Activated CD8-positive, alpha-beta memory T cell treated with anti-CD3 and anti-CD28 coated beads, Interleukin-2, amount 10 ng/mL, durations not matched to agents 7 days and 5 days (primary cell): ENCODE measurements at regions of chr15 and their contacts with region 1.

Region 1: DNA sequence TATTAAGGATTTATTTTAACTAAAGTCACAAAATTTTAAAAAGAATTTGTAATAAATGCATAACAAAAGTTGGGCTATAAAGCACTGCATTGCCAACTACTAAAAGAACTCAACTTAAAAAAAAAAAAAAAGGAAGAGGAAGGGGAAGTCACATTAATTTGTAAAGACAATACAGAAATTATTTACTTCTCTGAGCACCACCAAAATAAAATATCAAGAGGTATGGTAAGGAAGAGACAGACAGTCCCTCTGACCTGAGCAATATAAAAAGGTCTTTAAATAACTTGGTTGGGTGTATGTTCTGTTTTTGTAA is 83.5 kb downstream of the UACA start:
- DNase-seq: no peak
- ATAC-seq: no peak
- H3K4me3 Mint-ChIP-seq: no peak overlapping the region
- H3K27ac Mint-ChIP-seq: no peak overlapping the region
- H3K4me1 Mint-ChIP-seq: peaks cover 2% of the 10 kb centered on the region
- H3K27me3 Mint-ChIP-seq: peaks cover 53% of the 10 kb centered on the region

Region 2: DNA sequence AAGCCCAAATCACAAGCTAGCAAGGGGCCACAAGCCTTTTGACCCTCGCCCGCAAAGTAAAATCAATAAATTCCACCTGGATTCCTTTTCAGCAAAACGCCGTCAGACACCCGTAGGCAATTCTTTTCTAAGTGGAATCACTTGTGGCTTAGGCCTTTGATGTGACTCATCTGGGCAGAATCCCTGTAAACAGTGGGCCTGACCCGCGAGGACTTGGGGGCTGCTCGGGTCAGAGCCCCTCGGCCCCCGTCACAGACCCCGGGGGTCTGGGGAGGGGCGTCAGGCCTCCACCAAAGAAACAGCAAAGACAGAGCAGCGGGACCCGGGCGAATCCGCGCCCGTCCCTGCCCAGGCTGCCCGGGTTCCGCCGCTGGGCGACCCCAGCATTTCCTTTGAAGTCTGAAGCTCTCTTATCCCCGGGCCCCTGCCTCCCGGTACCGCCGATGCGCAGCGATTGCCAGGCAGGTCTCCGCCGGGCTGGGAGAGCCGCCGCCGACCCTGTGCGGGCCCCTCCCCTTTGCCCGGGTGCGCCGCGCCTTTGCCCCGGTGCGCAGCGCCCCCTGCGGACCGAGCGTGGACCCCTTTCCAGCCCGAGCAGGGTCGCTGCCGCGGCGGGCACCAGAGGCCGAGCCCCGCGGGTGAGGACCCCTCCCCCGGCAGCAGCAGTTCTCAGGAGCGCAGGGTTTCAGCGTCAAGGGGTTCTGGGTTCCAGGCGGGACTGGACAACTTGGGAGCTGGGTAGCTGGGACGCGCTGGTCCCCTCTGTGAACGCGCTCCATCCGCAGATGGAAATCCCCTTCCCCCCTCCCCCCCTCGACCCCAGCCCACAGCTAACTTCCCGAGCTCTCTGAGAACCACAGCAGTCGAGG is 94.8 kb before region 1 on chr15:
- CTCF ChIA-PET with region 1: no interaction called
- DNase-seq: no peak
- ATAC-seq: peak; percentile 33
- H3K4me3 Mint-ChIP-seq: no peak overlapping the region
- H3K27ac Mint-ChIP-seq: no peak overlapping the region
- H3K4me1 Mint-ChIP-seq: peaks cover 28% of the 10 kb centered on the region
- H3K27me3 Mint-ChIP-seq: peaks cover 37% of the 10 kb centered on the region

Region 3: GRCh38 chr15:70810916-70811578 is 131.2 kb after region 1 on chr15:
- CTCF ChIA-PET with region 1: interaction called, 22 read pairs
- DNase-seq: no peak
- ATAC-seq: no peak
- H3K4me3 Mint-ChIP-seq: no peak overlapping the region
- H3K27ac Mint-ChIP-seq: no peak overlapping the region
- H3K4me1 Mint-ChIP-seq: peaks cover 4% of the 10 kb centered on the region
- H3K27me3 Mint-ChIP-seq: peaks cover 7% of the 10 kb centered on the region